MCF 10A (cell line): ENCODE measurements at regions of chr6 and their contacts with region 1.

Region 1: GRCh38 chr6:132669690-132670291 is 10.8 kb upstream of the TAAR1 start:
- DNase-seq: peak; percentile 51
- H3K4me3 Mint-ChIP-seq: no peak overlapping the region
- H3K27ac Mint-ChIP-seq: no peak overlapping the region
- H3K4me1 Mint-ChIP-seq: peaks cover 7% of the 10 kb centered on the region
- H3K27me3 Mint-ChIP-seq: no peaks in the 10 kb centered on the region
- CTCF ChIP-seq: peak; percentile 54

Region 2: DNA sequence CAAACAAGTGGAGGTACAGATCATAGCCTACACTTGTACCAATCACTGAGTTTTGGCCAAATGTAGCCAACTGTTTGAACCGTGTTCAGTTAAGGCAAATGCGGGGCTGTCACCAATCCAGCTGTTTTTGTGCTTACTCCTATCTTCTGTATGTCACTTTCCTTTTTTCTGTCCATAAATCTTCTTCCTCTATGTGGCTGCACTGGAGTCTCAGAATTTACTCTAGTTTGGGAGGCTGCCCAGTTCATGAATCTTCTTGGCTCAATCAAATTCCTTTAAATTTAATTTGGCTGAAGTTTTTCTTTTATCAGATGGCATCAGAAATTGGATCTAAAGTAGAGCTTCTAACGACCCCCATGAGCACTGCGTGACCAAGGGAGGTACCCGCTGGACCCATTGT is 145.1 kb before region 1 on chr6:
- CTCF ChIA-PET with region 1: interaction called, 11 read pairs
- POLR2A ChIA-PET with region 1: no interaction called
- intact Hi-C with region 1: no loop called
- DNase-seq: no peak
- H3K4me3 Mint-ChIP-seq: no peak overlapping the region
- H3K27ac Mint-ChIP-seq: no peak overlapping the region
- H3K4me1 Mint-ChIP-seq: no peaks in the 10 kb centered on the region
- H3K27me3 Mint-ChIP-seq: peaks cover 31% of the 10 kb centered on the region
- CTCF ChIP-seq: no peak

Region 3: GRCh38 chr6:132683543-132683942 is 13.8 kb after region 1 on chr6:
- CTCF ChIA-PET with region 1: interaction called, 13 read pairs
- POLR2A ChIA-PET with region 1: interaction called, 5 read pairs
- intact Hi-C with region 1: no loop called
- DNase-seq: peak; percentile 85
- H3K4me3 Mint-ChIP-seq: peak overlapping the region; percentile 66
- H3K27ac Mint-ChIP-seq: peak overlapping the region; percentile 95
- H3K4me1 Mint-ChIP-seq: peaks cover 28% of the 10 kb centered on the region
- H3K27me3 Mint-ChIP-seq: no peaks in the 10 kb centered on the region
- CTCF ChIP-seq: no peak

Region 4: GRCh38 chr6:132715204-132715603 is 45.4 kb after region 1 on chr6:
- CTCF ChIA-PET with region 1: interaction called, 57 read pairs
- POLR2A ChIA-PET with region 1: interaction called, 3 read pairs
- intact Hi-C with region 1: loop called (anchors 1 kb)
- DNase-seq: peak; percentile 84
- H3K4me3 Mint-ChIP-seq: no peak overlapping the region
- H3K27ac Mint-ChIP-seq: no peak overlapping the region
- H3K4me1 Mint-ChIP-seq: peaks cover 11% of the 10 kb centered on the region
- H3K27me3 Mint-ChIP-seq: no peaks in the 10 kb centered on the region
- CTCF ChIP-seq: peak; percentile 51

Region 5: GRCh38 chr6:132798869-132799538 is 129.2 kb after region 1 on chr6:
- CTCF ChIA-PET with region 1: interaction called, 39 read pairs
- POLR2A ChIA-PET with region 1: interaction called, 12 read pairs
- intact Hi-C with region 1: loop called (anchors 1 kb)
- DNase-seq: peak; percentile 85
- H3K4me3 Mint-ChIP-seq: peak overlapping the region; percentile 94
- H3K27ac Mint-ChIP-seq: no peak overlapping the region
- H3K4me1 Mint-ChIP-seq: peaks cover 11% of the 10 kb centered on the region
- H3K27me3 Mint-ChIP-seq: no peaks in the 10 kb centered on the region
- CTCF ChIP-seq: peak; percentile 64

Region 6: GRCh38 chr6:134379086-134379485 is 1709.3 kb after region 1 on chr6:
- CTCF ChIA-PET with region 1: no interaction called
- POLR2A ChIA-PET with region 1: no interaction called
- intact Hi-C with region 1: no loop called
- DNase-seq: no peak
- H3K4me3 Mint-ChIP-seq: no peak overlapping the region
- H3K27ac Mint-ChIP-seq: peak overlapping the region; percentile 64
- H3K4me1 Mint-ChIP-seq: peaks cover 27% of the 10 kb centered on the region
- H3K27me3 Mint-ChIP-seq: no peaks in the 10 kb centered on the region
- CTCF ChIP-seq: no peak